PC-3 (cell line): ENCODE measurements at regions of chr7 and their contacts with region 1.

Region 1: GRCh38 chr7:16891338-16891737 is 9.6 kb upstream of the AGR3 start:
- DNase-seq: peak; percentile 85
- ATAC-seq: peak; percentile 87
- H3K4me3 ChIP-seq: no peak overlapping the region
- H3K27ac ChIP-seq: peak overlapping the region; percentile 45
- H3K4me1 ChIP-seq: peaks cover 37% of the 10 kb centered on the region
- H3K27me3 ChIP-seq: no peaks in the 10 kb centered on the region
- CTCF ChIP-seq: peak; percentile 88

Region 2: GRCh38 chr7:16431646-16432424 is 459.5 kb before region 1 on chr7:
- CTCF ChIA-PET with region 1: no interaction called
- POLR2A ChIA-PET with region 1: no interaction called
- intact Hi-C with region 1: no loop called
- DNase-seq: peak; percentile 64
- ATAC-seq: peak; percentile 64
- H3K4me3 ChIP-seq: no peak overlapping the region
- H3K27ac ChIP-seq: no peak overlapping the region
- H3K4me1 ChIP-seq: peaks cover 26% of the 10 kb centered on the region
- H3K27me3 ChIP-seq: no peaks in the 10 kb centered on the region
- CTCF ChIP-seq: peak; percentile 77

Region 3: GRCh38 chr7:16847366-16847864 is 43.9 kb before region 1 on chr7:
- CTCF ChIA-PET with region 1: no interaction called
- POLR2A ChIA-PET with region 1: interaction called, 3 read pairs
- intact Hi-C with region 1: loop called (anchors 1 kb)
- DNase-seq: peak; percentile 95
- ATAC-seq: peak; percentile 99
- H3K4me3 ChIP-seq: peak overlapping the region; percentile 61
- H3K27ac ChIP-seq: peak overlapping the region; percentile 97
- H3K4me1 ChIP-seq: peaks cover 38% of the 10 kb centered on the region
- H3K27me3 ChIP-seq: no peaks in the 10 kb centered on the region
- CTCF ChIP-seq: no peak

Region 4: DNA sequence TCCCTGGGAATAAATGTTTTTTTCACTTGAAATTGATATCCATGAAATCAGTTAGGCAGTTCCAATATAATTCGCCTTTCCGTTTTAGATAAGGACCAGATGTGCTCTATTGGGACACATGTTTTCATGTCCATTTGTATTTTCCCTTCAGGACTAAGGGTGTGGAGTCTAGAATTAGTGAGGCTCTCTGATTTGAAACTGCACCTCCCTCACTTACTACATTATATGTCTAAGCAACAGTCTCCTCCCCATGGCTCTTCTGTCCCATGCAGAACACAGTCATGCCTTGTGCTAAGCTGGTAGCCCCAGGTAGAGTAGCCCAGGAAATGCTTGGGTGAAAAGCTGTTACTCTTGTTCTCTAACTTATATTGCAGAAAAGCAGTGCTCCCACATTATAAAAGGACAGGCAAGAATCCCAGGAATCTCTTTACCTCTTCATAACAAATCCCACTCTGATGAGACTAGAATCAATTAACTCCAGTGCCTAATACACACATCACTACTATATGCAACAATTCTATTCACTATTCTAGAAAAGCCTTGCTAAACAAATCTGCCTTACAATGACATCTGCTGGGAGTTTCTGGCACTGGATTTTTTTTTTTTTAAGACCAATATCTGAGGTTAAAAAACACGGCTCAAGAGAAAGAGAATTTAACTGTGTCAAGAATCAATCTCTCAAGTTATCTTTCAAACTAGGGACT is 755.1 kb after region 1 on chr7:
- CTCF ChIA-PET with region 1: interaction called, 3 read pairs
- POLR2A ChIA-PET with region 1: no interaction called
- intact Hi-C with region 1: loop called (anchors 2 kb)
- DNase-seq: peak; percentile 54
- ATAC-seq: peak; percentile 87
- H3K4me3 ChIP-seq: no peak overlapping the region
- H3K27ac ChIP-seq: no peak overlapping the region
- H3K4me1 ChIP-seq: peaks cover 8% of the 10 kb centered on the region
- H3K27me3 ChIP-seq: no peaks in the 10 kb centered on the region
- CTCF ChIP-seq: peak; percentile 77